ENCODE measurements at regions of chr12 and their contacts with region 1.

Region 1: GRCh38 chr12:11648831-11649702 is at the start of gene ETV6:
- DNase-seq: peak; percentile 68 to 82
- ATAC-seq: peak; percentile 53 to 82 (median 71)
- H3K4me3 ChIP-seq: peak within 1 kb of the TSS; percentile 56 to 94 (median 88)
- H3K27ac ChIP-seq: peak within 1 kb of the TSS; percentile 92 to 99 (median 98)
- H3K4me1 ChIP-seq: peaks cover 6 to 37% (median 30%) of the 10 kb centered on the region in 9 donors
- H3K27me3 ChIP-seq: no peaks in the 10 kb centered on the region
- CTCF ChIP-seq: peak in 1 of 9 donors; percentile 24
- total RNA-seq, gene ETV6: 8.5 to 33.5 (median 15.9) TPM

Region 2: GRCh38 chr12:11136075-11136474 is 513.0 kb before region 1 on chr12:
- intact Hi-C with region 1: no loop called
- DNase-seq: no peak
- ATAC-seq: no peak
- H3K4me3 ChIP-seq: no peak overlapping the region
- H3K27ac ChIP-seq: no peak overlapping the region
- H3K4me1 ChIP-seq: peaks cover 0 to 27% (median 7%) of the 10 kb centered on the region in 9 donors
- H3K27me3 ChIP-seq: no peaks in the 10 kb centered on the region
- CTCF ChIP-seq: no peak

Region 3: DNA sequence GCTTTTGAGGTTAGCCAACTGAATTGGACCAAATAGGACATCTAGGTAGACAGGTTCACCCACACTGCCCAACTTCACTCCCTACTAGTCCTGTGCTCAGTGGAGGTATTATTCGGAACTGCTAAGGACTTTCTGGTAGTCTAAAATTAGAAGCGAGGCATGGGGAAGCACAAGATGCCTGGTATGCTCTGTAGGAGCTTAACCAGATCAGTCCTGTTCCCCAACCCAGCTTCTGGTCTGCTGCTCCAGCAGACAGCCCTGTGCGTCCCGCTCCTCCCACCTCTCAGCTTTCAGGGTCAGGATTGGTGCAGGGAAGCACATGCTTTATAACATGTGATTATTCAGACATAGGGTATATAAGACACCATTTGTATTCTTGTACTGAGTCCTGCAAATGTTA is 410.8 kb before region 1 on chr12:
- intact Hi-C with region 1: no loop called
- DNase-seq: no peak
- ATAC-seq: peak in 3 of 8 donors; percentile 25 to 70 (median 53)
- H3K4me3 ChIP-seq: no peak overlapping the region
- H3K27ac ChIP-seq: no peak overlapping the region
- H3K4me1 ChIP-seq: no peaks in the 10 kb centered on the region
- H3K27me3 ChIP-seq: no peaks in the 10 kb centered on the region
- CTCF ChIP-seq: no peak

Region 4: DNA sequence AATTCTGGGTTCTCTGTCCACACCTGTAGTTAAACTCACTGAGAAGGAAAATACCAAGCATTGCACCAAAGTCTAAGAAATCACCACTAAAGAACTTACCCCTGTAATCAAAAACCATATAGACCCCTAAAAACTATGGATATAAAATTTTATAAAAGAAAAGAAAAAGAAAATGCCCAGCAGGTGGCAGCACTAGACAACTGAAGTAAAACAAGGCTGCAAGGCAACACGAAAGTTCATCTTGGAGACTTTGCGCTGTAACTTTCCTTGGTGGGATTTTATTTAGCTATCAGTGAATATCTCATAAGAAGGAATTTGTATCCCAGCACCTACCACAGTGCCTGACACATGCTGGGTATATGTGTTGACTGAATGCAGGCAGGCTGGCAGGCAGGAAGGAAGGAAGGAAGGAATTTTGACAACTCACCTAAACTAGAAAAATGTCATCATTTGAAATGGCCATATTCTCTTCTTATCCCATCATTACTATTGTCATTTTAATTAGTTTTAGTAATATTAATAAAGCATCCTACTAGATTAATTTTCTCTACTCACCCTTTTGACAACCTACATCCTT is 67.8 kb before region 1 on chr12:
- intact Hi-C with region 1: loop called in 2 of 10 experiments (anchors 5 to 10 kb)
- DNase-seq: peak in 1 of 2 donors; percentile 76
- ATAC-seq: peak in 2 of 8 donors; percentile 37
- H3K4me3 ChIP-seq: no peak overlapping the region
- H3K27ac ChIP-seq: no peak overlapping the region
- H3K4me1 ChIP-seq: peaks cover 0 to 26% (median 0%) of the 10 kb centered on the region in 9 donors
- H3K27me3 ChIP-seq: peaks cover 0 to 8% (median 0%) of the 10 kb centered on the region in 7 donors
- CTCF ChIP-seq: peak; percentile 63 to 80 (median 69)

Region 5: GRCh38 chr12:11719678-11720099 is 70.6 kb after region 1 on chr12:
- intact Hi-C with region 1: loop called in 2 of 10 experiments (anchors 2 to 5 kb)
- DNase-seq: peak; percentile 31 to 70
- ATAC-seq: peak; percentile 66 to 89 (median 82)
- H3K4me3 ChIP-seq: no peak overlapping the region
- H3K27ac ChIP-seq: peak overlapping the region in 5 of 10 donors; percentile 29 to 76 (median 52)
- H3K4me1 ChIP-seq: peaks cover 5 to 69% (median 42%) of the 10 kb centered on the region in 9 donors
- H3K27me3 ChIP-seq: no peaks in the 10 kb centered on the region
- CTCF ChIP-seq: no peak

Region 6: DNA sequence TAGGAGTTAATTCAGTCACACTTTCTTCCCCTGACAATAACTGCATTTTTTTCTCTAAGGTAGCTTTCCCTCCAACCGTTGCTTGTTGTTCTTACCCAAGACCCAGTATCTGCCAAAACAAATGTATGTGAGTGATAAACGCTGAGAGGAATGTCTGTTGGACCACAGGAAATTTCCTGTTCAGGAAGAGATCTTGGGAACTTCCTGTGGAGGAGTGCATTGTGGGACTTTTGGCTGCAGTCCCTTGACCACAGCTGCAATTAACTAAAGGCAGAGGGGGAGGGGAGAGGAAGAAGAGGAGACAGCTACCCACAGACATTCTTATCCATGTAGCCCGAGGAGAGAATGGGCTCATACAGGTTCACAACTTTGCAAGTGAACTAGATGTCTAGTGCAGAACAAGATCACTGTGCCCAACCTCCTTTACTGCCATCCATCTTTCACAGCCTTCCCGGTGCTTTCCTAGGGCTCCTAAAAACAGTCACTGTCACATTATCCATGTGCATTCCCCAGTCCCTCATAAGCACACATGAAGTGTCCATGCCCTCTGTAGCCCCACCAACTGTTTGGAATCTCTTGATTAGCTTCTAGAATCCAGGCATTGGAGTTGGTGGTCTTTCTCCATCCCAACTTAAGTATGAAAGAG is 149.9 kb after region 1 on chr12:
- intact Hi-C with region 1: loop called in 4 of 10 experiments (anchors 10 kb)
- DNase-seq: peak in 1 of 2 donors; percentile 70
- ATAC-seq: peak in 6 of 8 donors; percentile 8 to 50 (median 27)
- H3K4me3 ChIP-seq: no peak overlapping the region
- H3K27ac ChIP-seq: peak overlapping the region in 6 of 10 donors; percentile 18 to 77 (median 54)
- H3K4me1 ChIP-seq: peaks cover 6 to 80% (median 58%) of the 10 kb centered on the region in 9 donors
- H3K27me3 ChIP-seq: no peaks in the 10 kb centered on the region
- CTCF ChIP-seq: no peak

Region 7: DNA sequence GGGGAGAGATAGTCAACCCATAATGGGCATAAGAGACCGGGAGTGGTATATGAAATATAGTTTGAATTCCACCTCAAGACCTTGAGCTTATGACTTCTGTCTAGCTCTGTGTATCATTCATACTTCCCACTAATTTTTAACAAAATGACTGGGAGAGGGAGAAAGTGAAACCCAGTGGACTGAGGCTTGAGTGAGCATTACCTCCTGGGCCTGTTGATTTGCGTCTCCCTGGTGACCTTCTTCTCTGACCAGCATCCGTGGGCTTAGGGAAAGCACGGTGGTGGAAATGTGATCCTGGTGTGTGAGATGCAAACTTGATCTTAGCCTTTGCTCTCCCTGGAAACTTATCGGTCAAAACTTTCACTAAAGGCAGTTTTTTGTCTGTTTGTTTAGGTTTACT is 213.7 kb after region 1 on chr12:
- intact Hi-C with region 1: loop called in 6 of 10 experiments (anchors 2 to 10 kb)
- DNase-seq: peak in 1 of 2 donors; percentile 51
- ATAC-seq: peak; percentile 58 to 82 (median 72)
- H3K4me3 ChIP-seq: peak overlapping the region in 2 of 10 donors; percentile 13 to 14
- H3K27ac ChIP-seq: peak overlapping the region; percentile 59 to 97 (median 86)
- H3K4me1 ChIP-seq: peaks cover 19 to 57% (median 53%) of the 10 kb centered on the region in 9 donors
- H3K27me3 ChIP-seq: no peaks in the 10 kb centered on the region
- CTCF ChIP-seq: no peak

Region 8: DNA sequence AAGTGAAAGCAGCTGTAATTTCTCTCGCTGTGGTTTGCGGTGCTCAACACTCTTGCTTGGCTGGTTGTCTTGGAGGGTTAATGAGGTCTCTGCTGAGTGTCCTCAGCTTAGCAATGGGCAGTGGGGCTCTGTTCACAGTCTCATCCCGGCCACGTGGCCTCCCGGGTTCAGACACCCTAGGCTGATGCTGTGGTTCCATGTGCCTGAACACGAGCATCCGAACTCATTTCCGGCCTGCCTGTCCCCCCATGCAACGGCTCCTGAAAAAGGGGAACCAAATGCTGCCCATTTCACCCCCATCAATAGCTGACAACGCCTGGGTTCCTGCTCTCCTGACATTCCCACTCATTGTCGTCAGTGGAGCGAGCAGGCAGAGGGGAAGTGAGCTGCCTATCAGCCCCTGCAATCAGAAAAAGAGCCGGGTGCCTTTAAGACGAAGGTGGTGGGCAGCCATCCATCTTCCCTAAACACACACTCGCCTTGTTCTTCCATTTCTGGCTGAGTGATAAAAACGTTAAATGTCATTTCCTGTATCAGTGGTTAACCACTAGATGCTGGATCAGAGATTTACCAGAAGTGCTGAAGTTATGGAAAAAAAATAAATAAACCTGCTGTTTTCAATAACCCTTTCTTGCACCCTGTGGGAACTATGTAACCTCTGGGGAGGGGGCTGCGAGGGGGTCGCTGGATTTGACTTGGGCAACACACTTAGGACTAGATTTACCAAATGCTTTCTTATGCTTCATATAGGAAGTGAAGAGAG is 361.4 kb after region 1 on chr12:
- intact Hi-C with region 1: loop called in 1 of 10 experiments (anchors 10 kb)
- DNase-seq: peak; percentile 41 to 62
- ATAC-seq: peak; percentile 61 to 87 (median 76)
- H3K4me3 ChIP-seq: peak overlapping the region in 5 of 10 donors; percentile 3 to 31 (median 22)
- H3K27ac ChIP-seq: peak overlapping the region in 6 of 10 donors; percentile 31 to 88 (median 51)
- H3K4me1 ChIP-seq: peaks cover 0 to 55% (median 3%) of the 10 kb centered on the region in 9 donors
- H3K27me3 ChIP-seq: no peaks in the 10 kb centered on the region
- CTCF ChIP-seq: no peak